ENCODE measurements at regions of chr18 and their contacts with region 1.

Region 1: GRCh38 chr18:22883179-22883578 is 49.9 kb upstream of the RBBP8 start:
- DNase-seq: no peak
- H3K4me3 ChIP-seq: no peak overlapping the region
- H3K27ac ChIP-seq: no peak overlapping the region
- H3K27me3 ChIP-seq: no peaks in the 10 kb centered on the region
- CTCF ChIP-seq: no peak

Region 2: DNA sequence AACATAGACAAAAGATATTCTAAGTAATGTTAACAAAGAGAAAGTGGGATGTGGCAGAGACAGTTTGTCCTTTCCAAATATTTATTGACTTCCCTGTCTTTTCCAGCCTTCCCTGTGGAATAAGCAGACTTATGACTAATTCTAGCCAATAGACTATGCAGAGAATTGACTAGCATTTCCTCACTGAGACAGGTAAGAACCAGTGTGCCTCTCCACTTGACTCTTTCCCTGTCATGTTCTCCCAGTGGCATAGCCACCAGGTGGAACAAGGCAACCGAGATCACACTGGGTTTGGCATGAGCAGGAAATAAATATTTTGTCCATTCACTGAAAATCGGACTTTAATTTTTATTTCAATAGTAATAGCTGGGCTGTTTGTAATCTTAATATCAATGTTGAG is 297.4 kb before region 1 on chr18:
- CTCF ChIA-PET with region 1: no interaction called
- POLR2A ChIA-PET with region 1: no interaction called
- DNase-seq: no peak
- H3K4me3 ChIP-seq: no peak overlapping the region
- H3K27ac ChIP-seq: no peak overlapping the region
- H3K27me3 ChIP-seq: peaks cover 5% of the 10 kb centered on the region
- CTCF ChIP-seq: no peak

Region 3: GRCh38 chr18:22865354-22866116 is 17.6 kb before region 1 on chr18:
- CTCF ChIA-PET with region 1: no interaction called
- POLR2A ChIA-PET with region 1: no interaction called
- DNase-seq: no peak
- H3K4me3 ChIP-seq: no peak overlapping the region
- H3K27ac ChIP-seq: no peak overlapping the region
- H3K27me3 ChIP-seq: peaks cover 7% of the 10 kb centered on the region
- CTCF ChIP-seq: no peak

Region 4: GRCh38 chr18:22899421-22899820 is 16.2 kb after region 1 on chr18:
- CTCF ChIA-PET with region 1: interaction called, 12 read pairs
- POLR2A ChIA-PET with region 1: no interaction called
- DNase-seq: no peak
- H3K4me3 ChIP-seq: no peak overlapping the region
- H3K27ac ChIP-seq: no peak overlapping the region
- H3K27me3 ChIP-seq: no peaks in the 10 kb centered on the region
- CTCF ChIP-seq: no peak

Region 5: DNA sequence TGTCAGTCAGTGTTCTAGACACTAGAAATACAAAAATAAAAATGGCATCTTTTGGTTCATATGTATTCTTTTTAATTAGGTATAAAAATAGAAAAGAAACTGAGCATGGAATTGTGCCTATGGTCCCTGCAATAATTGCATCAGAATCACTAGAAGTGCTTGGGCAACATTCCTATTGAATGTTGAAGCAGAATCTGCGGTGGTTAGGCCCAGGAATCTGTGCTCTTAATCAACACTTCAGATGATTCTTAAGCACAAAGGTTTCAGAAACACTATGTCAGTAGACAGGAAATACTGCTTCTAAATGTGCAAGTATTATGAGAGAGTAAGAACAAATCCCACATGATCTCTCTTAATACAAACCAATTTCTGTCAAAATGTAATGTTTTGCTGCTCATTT is 29.7 kb after region 1 on chr18:
- CTCF ChIA-PET with region 1: no interaction called
- POLR2A ChIA-PET with region 1: no interaction called
- DNase-seq: no peak
- H3K4me3 ChIP-seq: no peak overlapping the region
- H3K27ac ChIP-seq: no peak overlapping the region
- H3K27me3 ChIP-seq: no peaks in the 10 kb centered on the region
- CTCF ChIP-seq: no peak

Measured in AG04450 (cell line).